Breast epithelium (tissue), 4 donors: ENCODE measurements at regions of chr19 and their contacts with region 1.

Region 1: GRCh38 chr19:30609656-30610270 is 237.6 kb downstream of the ZNF536 start:
- DNase-seq: no peak
- H3K4me3 ChIP-seq: no peak overlapping the region
- H3K27ac ChIP-seq: no peak overlapping the region
- H3K4me1 ChIP-seq: no peaks in the 10 kb centered on the region
- H3K27me3 ChIP-seq: no peaks in the 10 kb centered on the region
- CTCF ChIP-seq: no peak
- POLR2A ChIP-seq: no peak

Region 2: DNA sequence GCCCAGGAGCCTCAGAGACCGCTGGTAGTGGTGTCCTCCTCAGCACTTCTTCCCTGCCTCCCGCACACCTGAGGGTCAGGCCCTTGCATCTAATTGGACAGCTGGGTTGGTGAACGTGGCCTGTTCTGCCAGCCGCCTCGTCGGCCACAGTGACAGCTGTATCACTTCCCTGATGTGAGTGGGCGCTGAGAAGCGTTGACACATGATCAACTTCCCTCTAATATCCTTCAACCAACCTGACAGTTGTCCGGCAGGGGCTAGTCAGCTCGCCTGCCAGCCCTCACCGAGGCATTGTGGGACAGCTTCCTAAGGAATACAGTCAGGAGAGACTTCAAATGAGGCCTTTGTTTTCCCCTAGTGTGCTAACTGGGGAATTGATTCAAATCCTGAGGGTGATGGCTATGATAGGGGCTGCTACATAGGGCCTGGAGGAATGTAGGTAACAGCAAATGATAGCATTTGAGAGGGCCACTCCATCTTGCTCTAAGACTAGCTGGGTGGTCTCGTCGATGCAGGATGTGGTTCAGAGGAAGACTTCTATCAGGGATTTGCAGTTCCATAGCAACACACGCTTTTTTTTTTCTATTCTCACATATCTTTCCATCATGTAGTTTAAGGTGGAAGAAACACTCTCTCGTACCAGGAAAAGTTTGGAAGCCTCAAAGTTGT is 508.7 kb after region 1 on chr19:
- intact Hi-C with region 1: loop called (anchors 5 kb)
- DNase-seq: no peak
- H3K4me3 ChIP-seq: no peak overlapping the region
- H3K27ac ChIP-seq: no peak overlapping the region
- H3K4me1 ChIP-seq: no peaks in the 10 kb centered on the region
- H3K27me3 ChIP-seq: no peaks in the 10 kb centered on the region
- CTCF ChIP-seq: no peak
- POLR2A ChIP-seq: no peak

Region 3: GRCh38 chr19:31500946-31501345 is 891.2 kb after region 1 on chr19:
- intact Hi-C with region 1: loop called (anchors 10 kb)
- DNase-seq: no peak
- H3K4me3 ChIP-seq: no peak overlapping the region
- H3K27ac ChIP-seq: no peak overlapping the region
- H3K4me1 ChIP-seq: no peaks in the 10 kb centered on the region
- H3K27me3 ChIP-seq: peaks cover 0 to 6% of the 10 kb centered on the region in 2 donors
- CTCF ChIP-seq: no peak
- POLR2A ChIP-seq: no peak